ENCODE measurements at regions of chr11 and their contacts with region 1.

Region 1: GRCh38 chr11:3867209-3868091 is 12.0 kb downstream of the STIM1 start:
- DNase-seq: peak; percentile 66
- ATAC-seq: peak; percentile 65
- H3K4me3 Mint-ChIP-seq: peak overlapping the region; percentile 51
- H3K27ac Mint-ChIP-seq: peak overlapping the region; percentile 94
- H3K4me1 Mint-ChIP-seq: peaks cover 85% of the 10 kb centered on the region
- H3K27me3 Mint-ChIP-seq: no peaks in the 10 kb centered on the region
- CTCF ChIP-seq: no peak

Region 2: DNA sequence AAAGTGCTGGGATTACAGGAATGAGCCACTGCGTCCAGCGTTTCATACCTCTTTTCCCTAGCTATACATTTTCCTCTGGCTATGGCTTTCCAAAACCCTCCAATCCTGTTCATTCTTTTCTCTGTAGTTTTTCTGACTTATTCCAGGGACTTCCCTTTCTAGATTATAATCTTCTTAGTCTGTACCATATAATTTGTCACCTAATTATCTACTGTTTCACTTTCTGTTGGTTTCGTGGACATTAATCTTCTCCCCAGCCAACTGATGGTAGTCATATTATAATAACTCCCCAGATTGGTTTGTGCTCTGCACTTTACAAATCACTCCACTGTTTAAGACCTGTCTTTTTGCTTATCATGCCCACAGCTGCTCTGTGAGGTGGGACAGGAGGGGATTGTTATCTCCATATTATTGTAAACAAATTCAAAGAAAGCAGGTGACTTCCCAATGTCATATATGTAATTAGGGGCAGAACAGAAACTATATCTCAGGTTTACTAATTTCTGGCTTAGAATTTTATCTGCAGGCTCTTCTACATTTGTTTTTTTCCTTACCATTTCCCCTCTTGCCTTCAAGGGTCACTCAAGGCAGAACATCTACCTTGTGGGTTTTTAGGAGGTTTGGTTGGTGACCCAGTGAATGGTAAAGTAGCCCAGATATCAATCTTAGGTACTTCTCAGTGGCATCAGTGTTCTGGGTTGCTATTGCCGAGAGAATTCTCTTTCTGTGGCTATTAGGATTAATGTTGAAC is 11.9 kb after region 1 on chr11:
- CTCF ChIA-PET with region 1: interaction called, 16 read pairs
- POLR2A ChIA-PET with region 1: interaction called, 7 read pairs
- intact Hi-C with region 1: no loop called
- DNase-seq: no peak
- ATAC-seq: peak; percentile 62
- H3K4me3 Mint-ChIP-seq: no peak overlapping the region
- H3K27ac Mint-ChIP-seq: peak overlapping the region; percentile 77
- H3K4me1 Mint-ChIP-seq: peaks cover 76% of the 10 kb centered on the region
- H3K27me3 Mint-ChIP-seq: no peaks in the 10 kb centered on the region
- CTCF ChIP-seq: no peak